ENCODE measurements at regions of chr4 and their contacts with region 1.

Region 1: DNA sequence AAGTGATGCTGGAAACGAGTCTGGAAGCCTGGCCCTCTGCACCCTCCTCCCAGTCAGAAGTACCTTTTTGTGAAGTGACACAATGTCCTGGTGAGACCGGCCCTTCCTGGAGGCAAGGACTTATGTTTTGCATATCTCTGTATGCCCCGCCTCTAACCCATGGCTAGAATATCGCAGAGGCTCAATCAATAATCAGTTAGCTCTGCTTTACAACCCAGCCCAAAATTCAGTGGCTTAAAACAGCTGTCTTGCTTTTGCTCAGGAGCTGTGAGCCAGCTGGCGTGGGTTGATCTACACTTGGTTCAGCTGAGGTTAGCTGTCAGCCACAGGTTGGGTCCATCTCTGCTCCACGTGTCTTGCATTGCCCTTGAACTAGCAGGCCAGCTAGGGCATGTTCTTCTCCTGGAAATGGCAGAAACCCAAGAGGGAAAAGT is 98.8 kb upstream of the METTL14 start:
- DNase-seq: no peak
- H3K4me3 ChIP-seq: no peak overlapping the region
- H3K27ac ChIP-seq: no peak overlapping the region
- H3K27me3 ChIP-seq: peaks cover 20% of the 10 kb centered on the region
- CTCF ChIP-seq: no peak

Region 2: DNA sequence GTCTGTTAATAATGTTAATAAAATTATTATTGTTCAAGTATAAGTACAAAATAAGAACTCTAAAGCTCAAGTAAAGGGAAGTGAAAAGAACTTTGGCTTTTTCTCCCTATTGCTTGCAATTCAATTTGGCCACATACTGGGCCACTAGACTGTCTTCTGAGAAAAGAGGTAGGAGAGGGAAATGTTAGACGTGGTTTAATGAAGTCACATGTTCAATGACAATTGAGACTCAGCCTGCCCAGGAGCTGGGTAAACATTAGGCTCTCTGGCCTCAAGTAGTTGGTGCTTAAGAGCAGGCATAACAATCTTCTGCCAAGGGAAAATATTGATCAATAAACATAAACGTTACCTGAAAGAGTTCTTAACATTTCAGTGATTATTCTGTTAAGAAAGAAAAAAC is 218.5 kb before region 1 on chr4:
- CTCF ChIA-PET with region 1: interaction called, 10 read pairs
- POLR2A ChIA-PET with region 1: no interaction called
- DNase-seq: no peak
- H3K4me3 ChIP-seq: no peak overlapping the region
- H3K27ac ChIP-seq: no peak overlapping the region
- H3K27me3 ChIP-seq: no peaks in the 10 kb centered on the region
- CTCF ChIP-seq: no peak

Region 3: DNA sequence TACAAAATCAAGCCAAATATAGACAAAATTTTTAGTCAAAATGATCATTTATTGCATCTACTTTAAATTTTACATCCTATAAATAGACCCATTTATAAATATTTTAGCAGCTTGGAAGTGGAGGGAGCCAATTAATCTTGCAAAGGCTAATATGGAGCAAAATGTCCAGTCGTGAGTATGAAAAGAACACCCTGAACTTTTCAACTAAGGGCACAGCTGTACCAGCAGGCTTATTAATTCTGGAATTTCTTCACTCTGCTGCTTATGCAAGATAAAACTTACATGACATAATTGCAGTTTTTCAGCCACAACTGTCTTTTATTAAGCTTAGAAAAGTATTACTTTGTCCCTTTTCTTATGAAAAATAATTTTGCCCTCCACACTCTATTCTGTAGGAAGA is 603.3 kb after region 1 on chr4:
- CTCF ChIA-PET with region 1: no interaction called
- POLR2A ChIA-PET with region 1: no interaction called
- DNase-seq: no peak
- H3K4me3 ChIP-seq: no peak overlapping the region
- H3K27ac ChIP-seq: no peak overlapping the region
- H3K27me3 ChIP-seq: no peaks in the 10 kb centered on the region
- CTCF ChIP-seq: no peak

Measured in AG04450 (cell line).